ENCODE measurements at regions of chr13 and their contacts with region 1.

Region 1: GRCh38 chr13:75870397-75870903 is 234.3 kb downstream of the LMO7 start:
- DNase-seq: peak; percentile 6
- ATAC-seq: peak; percentile 47
- H3K4me3 Mint-ChIP-seq: peak overlapping the region; percentile 54
- H3K27ac Mint-ChIP-seq: peak overlapping the region; percentile 27
- H3K4me1 Mint-ChIP-seq: peaks cover 6% of the 10 kb centered on the region
- H3K27me3 Mint-ChIP-seq: peaks cover 1% of the 10 kb centered on the region
- CTCF ChIP-seq: peak; percentile 87

Region 2: GRCh38 chr13:75675421-75675820 is 195.0 kb before region 1 on chr13:
- CTCF ChIA-PET with region 1: interaction called, 11 read pairs
- POLR2A ChIA-PET with region 1: no interaction called
- intact Hi-C with region 1: no loop called
- DNase-seq: no peak
- ATAC-seq: no peak
- H3K4me3 Mint-ChIP-seq: no peak overlapping the region
- H3K27ac Mint-ChIP-seq: no peak overlapping the region
- H3K4me1 Mint-ChIP-seq: no peaks in the 10 kb centered on the region
- H3K27me3 Mint-ChIP-seq: no peaks in the 10 kb centered on the region
- CTCF ChIP-seq: no peak

Region 3: DNA sequence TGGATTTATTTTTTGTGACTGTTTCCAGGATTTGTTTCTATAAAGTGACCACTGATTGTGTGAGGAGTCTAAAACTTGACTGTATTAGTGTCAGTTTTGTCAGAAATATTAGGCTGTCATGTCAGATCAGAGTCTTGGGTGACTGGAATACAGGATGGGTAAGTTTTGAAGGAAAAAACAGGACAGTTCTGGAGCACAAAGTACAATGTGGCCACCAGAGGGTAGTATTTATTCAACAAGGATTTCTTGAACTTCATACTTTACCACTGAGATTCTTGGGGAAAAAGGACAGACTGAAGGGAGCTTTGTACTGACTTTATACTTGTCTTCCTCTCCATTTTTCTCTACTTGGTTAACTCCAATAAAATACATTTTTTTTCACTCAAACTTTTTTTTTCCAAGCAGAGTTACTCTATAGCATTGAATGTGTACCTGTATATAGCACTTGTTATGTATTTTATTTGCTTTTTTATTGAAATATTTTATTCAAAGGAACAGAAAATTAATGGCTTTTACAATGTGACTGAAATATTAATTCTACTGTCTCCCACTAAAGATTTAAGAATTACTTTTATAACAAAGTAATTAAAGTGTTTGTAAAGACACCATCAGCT is 183.2 kb before region 1 on chr13:
- CTCF ChIA-PET with region 1: interaction called, 16 read pairs
- POLR2A ChIA-PET with region 1: no interaction called
- intact Hi-C with region 1: no loop called
- DNase-seq: no peak
- ATAC-seq: no peak
- H3K4me3 Mint-ChIP-seq: no peak overlapping the region
- H3K27ac Mint-ChIP-seq: no peak overlapping the region
- H3K4me1 Mint-ChIP-seq: peaks cover 10% of the 10 kb centered on the region
- H3K27me3 Mint-ChIP-seq: no peaks in the 10 kb centered on the region
- CTCF ChIP-seq: peak; percentile 47

Region 4: GRCh38 chr13:75760131-75761021 is 110.1 kb before region 1 on chr13:
- CTCF ChIA-PET with region 1: interaction called, 23 read pairs
- POLR2A ChIA-PET with region 1: no interaction called
- intact Hi-C with region 1: no loop called
- DNase-seq: peak; percentile 30
- ATAC-seq: peak; percentile 67
- H3K4me3 Mint-ChIP-seq: peak overlapping the region; percentile 67
- H3K27ac Mint-ChIP-seq: peak overlapping the region; percentile 82
- H3K4me1 Mint-ChIP-seq: peaks cover 70% of the 10 kb centered on the region
- H3K27me3 Mint-ChIP-seq: no peaks in the 10 kb centered on the region
- CTCF ChIP-seq: peak; percentile 46

Region 5: DNA sequence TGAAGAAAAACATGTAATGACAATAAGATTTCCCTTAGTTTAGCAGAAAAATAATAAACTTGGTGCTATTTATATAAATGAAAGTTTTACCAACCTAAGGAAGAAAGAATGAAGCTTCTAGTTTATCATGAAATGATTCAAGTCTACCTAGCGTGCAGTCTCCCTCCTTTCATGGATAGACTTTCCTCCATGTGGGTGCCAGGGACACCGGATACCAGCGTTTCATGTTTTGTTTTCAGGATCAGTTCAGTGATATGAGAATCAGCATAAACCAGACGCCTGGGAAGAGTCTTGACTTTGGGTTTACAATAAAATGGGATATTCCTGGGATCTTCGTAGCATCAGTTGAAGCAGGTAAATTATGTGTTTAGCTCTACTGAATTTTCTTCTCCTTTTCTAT is 37.6 kb before region 1 on chr13:
- CTCF ChIA-PET with region 1: interaction called, 13 read pairs
- POLR2A ChIA-PET with region 1: no interaction called
- intact Hi-C with region 1: no loop called
- DNase-seq: no peak
- ATAC-seq: no peak
- H3K4me3 Mint-ChIP-seq: no peak overlapping the region
- H3K27ac Mint-ChIP-seq: no peak overlapping the region
- H3K4me1 Mint-ChIP-seq: no peaks in the 10 kb centered on the region
- H3K27me3 Mint-ChIP-seq: no peaks in the 10 kb centered on the region
- CTCF ChIP-seq: no peak

Region 6: DNA sequence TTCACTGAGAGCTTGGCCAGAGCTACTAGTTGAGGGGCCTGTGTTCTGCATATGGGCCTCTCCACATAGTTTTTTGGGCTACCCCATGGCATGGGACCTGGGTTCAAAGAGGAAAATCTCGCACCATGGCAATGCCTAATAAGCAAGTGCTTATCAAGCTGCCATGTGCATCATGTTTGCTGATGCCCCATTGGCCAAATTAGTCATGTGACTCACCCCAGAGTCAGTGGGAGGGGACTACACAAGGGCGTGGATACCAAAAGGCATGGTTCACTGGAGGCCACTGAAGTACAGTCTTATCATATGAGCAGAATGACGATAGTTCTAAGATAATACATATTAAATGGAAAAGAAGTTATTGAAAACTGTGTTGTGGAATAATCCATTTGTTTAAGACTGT is 19.5 kb before region 1 on chr13:
- CTCF ChIA-PET with region 1: interaction called, 36 read pairs
- POLR2A ChIA-PET with region 1: no interaction called
- intact Hi-C with region 1: no loop called
- DNase-seq: no peak
- ATAC-seq: no peak
- H3K4me3 Mint-ChIP-seq: no peak overlapping the region
- H3K27ac Mint-ChIP-seq: no peak overlapping the region
- H3K4me1 Mint-ChIP-seq: peaks cover 5% of the 10 kb centered on the region
- H3K27me3 Mint-ChIP-seq: no peaks in the 10 kb centered on the region
- CTCF ChIP-seq: no peak

Region 7: DNA sequence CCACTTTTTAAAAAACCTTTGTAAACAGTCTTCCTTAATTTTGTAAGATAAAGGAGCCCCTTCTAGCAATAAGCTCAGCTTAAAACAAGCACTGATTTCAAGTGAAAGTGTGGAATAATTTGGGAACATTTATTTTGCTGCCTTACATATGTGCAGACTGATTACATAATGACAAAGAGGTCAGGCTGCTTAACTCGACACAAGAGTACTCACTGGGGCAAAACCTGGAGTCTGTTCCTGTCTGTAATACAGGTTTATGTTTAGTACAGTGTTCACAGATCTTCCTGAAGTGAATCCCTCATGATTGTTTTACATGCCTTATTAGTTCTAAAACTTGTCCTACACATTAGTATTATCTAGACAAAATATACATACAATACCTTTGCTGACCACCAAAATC is 375.5 kb after region 1 on chr13:
- CTCF ChIA-PET with region 1: no interaction called
- POLR2A ChIA-PET with region 1: no interaction called
- intact Hi-C with region 1: no loop called
- DNase-seq: no peak
- ATAC-seq: no peak
- H3K4me3 Mint-ChIP-seq: no peak overlapping the region
- H3K27ac Mint-ChIP-seq: no peak overlapping the region
- H3K4me1 Mint-ChIP-seq: no peaks in the 10 kb centered on the region
- H3K27me3 Mint-ChIP-seq: peaks cover 1% of the 10 kb centered on the region
- CTCF ChIP-seq: no peak

Region 8: DNA sequence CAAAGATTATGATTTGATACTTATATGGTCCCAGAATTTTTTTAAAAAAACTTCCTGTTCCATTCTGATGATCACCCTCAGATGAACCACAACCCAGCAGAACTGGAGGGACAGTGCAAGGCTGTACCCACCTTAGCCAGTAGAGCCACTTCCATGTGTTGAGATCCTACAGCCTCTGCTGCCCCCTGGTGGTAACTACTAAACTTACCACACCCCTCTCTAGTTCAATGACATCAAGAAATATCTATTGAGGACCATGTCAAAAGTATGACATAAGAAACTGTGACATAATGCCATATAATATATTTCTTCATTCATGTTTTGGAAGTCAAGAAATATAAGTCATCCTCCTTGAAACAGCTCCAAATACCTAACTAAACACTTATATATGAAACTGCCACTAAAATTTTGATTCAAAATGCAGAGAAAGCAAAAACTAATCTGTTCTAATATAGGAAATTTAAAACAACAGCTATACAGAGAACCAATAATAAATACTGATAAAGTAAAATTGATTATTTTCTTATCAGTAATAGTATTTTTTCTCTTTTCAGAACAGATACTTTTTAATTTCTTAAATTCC is 603.2 kb after region 1 on chr13:
- CTCF ChIA-PET with region 1: interaction called, 58 read pairs
- POLR2A ChIA-PET with region 1: no interaction called
- intact Hi-C with region 1: no loop called
- DNase-seq: peak; percentile 84
- ATAC-seq: peak; percentile 97
- H3K4me3 Mint-ChIP-seq: no peak overlapping the region
- H3K27ac Mint-ChIP-seq: no peak overlapping the region
- H3K4me1 Mint-ChIP-seq: no peaks in the 10 kb centered on the region
- H3K27me3 Mint-ChIP-seq: peaks cover 7% of the 10 kb centered on the region
- CTCF ChIP-seq: peak; percentile 82